Activated CD4-positive, alpha-beta T cell treated with anti-CD3 and anti-CD28 coated beads for 36 hours (primary cell): ENCODE measurements at regions of chr6 and their contacts with region 1.

Region 1: DNA sequence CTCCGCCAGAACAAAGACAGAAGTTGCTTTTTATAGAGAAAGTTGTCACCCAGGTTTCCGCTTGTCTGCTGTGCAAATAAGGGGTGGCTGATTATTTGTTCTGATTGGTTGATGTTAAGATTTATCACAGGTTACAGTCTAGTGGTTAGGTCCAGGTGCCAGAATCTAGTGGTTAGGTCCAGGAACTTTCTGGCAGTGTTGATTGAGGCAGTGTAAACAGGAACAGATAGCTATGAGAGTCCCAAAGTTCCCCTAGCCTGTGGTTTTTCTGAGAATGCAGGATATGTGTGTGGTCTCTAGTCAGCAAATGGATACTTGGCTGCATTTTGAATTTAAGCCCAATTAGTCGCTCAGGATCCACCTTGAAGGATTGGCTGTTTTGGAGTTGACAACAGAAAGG is 148.0 kb downstream of the TMEM200A start:
- DNase-seq: peak; percentile 62
- ATAC-seq: peak; percentile 81
- H3K4me3 Mint-ChIP-seq: no peak overlapping the region
- H3K27ac Mint-ChIP-seq: peak overlapping the region; percentile 76
- H3K4me1 Mint-ChIP-seq: peaks cover 61% of the 10 kb centered on the region
- H3K27me3 Mint-ChIP-seq: no peaks in the 10 kb centered on the region

Region 2: DNA sequence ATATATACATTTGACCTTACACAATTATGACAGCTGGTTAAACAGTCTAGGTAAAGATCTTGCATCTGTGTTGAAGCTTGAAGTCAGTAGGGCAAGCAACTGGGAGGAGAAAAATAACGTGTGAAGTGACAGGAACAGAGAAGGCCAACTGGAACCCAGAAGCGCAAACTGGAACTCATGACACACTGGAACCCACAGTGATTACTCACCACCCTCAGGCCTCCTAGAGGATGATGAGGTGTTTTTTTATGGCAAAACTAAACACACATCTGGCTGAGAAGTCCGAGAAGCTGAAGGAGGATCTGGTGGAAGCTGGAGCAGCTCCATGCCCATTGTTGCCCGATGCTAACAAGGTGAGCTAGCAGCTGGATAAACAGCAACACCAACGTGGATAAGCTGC is 39.9 kb before region 1 on chr6:
- CTCF ChIA-PET with region 1: no interaction called
- POLR2A ChIA-PET with region 1: no interaction called
- intact Hi-C with region 1: no loop called
- DNase-seq: peak; percentile 32
- ATAC-seq: peak; percentile 61
- H3K4me3 Mint-ChIP-seq: no peak overlapping the region
- H3K27ac Mint-ChIP-seq: no peak overlapping the region
- H3K4me1 Mint-ChIP-seq: no peaks in the 10 kb centered on the region
- H3K27me3 Mint-ChIP-seq: no peaks in the 10 kb centered on the region

Region 3: DNA sequence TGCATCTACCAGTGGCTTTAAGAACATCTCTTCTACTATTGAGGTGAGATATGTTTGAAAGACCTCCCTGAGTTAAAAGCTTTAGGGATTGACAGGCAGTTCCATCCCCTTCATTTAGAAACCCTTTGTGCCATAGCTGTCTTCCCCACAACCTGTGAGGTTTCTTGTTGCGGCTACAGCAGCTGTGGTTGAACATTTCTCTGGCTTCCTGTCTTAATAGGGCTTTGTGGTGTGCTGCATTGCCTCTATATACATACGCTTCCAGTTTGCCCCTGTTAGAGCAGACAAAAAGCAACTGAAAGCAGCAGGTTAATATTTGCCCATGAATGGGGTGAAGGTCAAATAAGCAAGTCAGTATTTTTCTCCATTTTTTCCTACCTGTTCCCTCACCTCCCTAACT is 62.2 kb after region 1 on chr6:
- CTCF ChIA-PET with region 1: interaction called, 4 read pairs
- POLR2A ChIA-PET with region 1: no interaction called
- intact Hi-C with region 1: loop called in 1 of 2 experiments (anchors 2 kb)
- DNase-seq: peak; percentile 72
- ATAC-seq: peak; percentile 90
- H3K4me3 Mint-ChIP-seq: no peak overlapping the region
- H3K27ac Mint-ChIP-seq: peak overlapping the region; percentile 66
- H3K4me1 Mint-ChIP-seq: peaks cover 39% of the 10 kb centered on the region
- H3K27me3 Mint-ChIP-seq: no peaks in the 10 kb centered on the region

Region 4: GRCh38 chr6:130620338-130620781 is 106.6 kb after region 1 on chr6:
- CTCF ChIA-PET with region 1: no interaction called
- POLR2A ChIA-PET with region 1: no interaction called
- intact Hi-C with region 1: loop called in 1 of 2 experiments (anchors 1 kb)
- DNase-seq: no peak
- ATAC-seq: peak; percentile 65
- H3K4me3 Mint-ChIP-seq: no peak overlapping the region
- H3K27ac Mint-ChIP-seq: no peak overlapping the region
- H3K4me1 Mint-ChIP-seq: peaks cover 20% of the 10 kb centered on the region
- H3K27me3 Mint-ChIP-seq: no peaks in the 10 kb centered on the region